ENCODE measurements at regions of chr6 and their contacts with region 1.

Region 1: DNA sequence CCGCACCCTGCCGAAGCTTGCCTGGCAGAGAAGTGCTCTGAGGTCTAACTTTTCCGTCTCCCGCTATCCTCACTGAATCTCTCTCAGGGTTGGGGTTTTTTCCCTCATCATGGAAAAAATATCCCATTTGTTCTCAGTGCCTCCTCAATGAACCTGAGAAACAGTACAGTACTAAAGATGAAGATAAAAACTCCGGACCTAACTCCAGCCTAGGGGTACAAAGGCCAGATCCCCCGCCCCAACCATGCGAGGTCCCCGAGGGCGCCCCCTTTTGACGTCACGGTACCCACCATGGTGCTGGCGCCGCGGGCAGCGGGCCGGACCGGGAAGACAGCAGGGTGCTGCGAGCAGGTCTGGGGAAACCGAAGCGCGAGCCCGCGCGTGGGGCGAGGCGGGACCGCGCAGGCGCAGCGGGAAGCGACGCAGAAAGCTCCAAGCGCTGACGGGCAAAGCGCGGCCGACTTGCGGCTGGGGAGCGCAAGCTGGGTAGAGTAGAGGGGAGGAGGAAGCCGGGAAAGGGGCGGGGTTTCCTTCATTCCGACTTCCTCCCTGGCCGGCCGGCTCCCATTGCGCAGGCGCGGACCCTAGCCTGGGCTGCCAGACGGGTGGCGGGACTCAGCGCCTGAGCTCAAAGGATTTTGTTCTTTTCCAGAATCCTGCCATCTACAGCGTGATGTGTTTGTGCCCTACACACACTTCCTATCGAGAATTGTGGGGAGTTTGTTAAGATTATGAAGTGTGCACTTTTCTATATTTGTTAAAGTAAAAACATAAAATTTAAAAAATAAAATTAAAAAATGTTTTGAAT is at the start of gene LSM2:
- DNase-seq: peak; percentile 99
- H3K27ac ChIP-seq: peak within 1 kb of the TSS; percentile 93
- CTCF ChIP-seq: no peak

Region 2: GRCh38 chr6:32133786-32134185 is 327.1 kb after region 1 on chr6:
- CTCF ChIA-PET with region 1: no interaction called
- POLR2A ChIA-PET with region 1: interaction called, 11 read pairs
- DNase-seq: no peak
- H3K27ac ChIP-seq: no peak overlapping the region
- CTCF ChIP-seq: no peak

Region 3: DNA sequence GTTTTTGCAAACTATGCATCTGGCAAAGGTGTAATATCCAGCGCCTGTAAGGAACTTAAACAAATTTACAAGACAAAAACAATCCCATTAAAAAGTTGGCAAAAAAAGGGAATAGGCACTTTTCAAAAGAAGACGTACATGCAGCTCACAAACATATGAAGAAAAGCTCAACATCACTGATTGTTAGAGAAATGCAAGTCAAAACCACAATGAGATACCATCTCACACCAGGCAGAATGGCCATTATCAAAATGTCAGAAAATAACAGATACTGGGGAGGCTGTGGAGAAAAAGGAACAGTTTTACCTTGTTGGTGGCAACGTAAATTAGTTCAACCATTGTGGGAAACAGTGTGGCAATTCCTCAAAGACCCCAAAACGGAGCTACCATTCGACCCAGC is 510.9 kb after region 1 on chr6:
- CTCF ChIA-PET with region 1: no interaction called
- POLR2A ChIA-PET with region 1: no interaction called
- DNase-seq: no peak
- H3K27ac ChIP-seq: no peak overlapping the region
- CTCF ChIP-seq: no peak